AG04449 (cell line): ENCODE measurements at regions of chr10 and their contacts with region 1.

Region 1: DNA sequence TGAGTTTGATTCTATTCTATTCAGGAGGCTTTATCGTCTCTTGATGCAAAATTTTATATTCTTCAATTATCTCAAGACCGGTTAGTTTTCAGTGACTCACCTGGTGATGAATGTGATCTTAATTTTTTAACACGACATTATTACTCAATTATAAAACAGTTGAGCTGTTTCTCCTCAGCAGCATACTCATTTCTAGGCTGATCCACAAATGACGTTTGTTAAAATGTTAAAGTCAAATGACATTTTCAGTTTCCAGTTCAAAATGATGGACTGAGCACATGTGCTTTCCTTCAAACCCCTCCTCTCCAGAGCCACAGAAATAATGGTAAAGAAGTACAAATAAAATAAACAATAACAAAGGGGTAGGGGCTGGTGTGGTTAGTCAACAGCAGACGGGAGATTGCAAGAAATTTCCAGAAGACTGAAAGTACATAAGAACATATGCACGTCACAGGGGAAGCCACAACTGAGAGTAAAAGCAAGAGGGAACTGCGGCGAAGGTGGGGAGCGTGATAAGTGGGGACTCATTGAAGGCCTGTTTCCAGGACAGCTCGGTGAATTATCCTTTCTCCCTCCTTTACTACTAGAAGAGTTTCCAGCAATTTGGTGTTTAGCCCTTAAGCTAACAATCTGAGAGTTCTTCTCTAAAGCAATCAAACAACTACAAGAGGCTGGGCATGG is 10.9 kb downstream of the MACROH2A2 start:
- DNase-seq: no peak
- H3K4me3 ChIP-seq: no peak overlapping the region
- CTCF ChIP-seq: no peak

Region 2: DNA sequence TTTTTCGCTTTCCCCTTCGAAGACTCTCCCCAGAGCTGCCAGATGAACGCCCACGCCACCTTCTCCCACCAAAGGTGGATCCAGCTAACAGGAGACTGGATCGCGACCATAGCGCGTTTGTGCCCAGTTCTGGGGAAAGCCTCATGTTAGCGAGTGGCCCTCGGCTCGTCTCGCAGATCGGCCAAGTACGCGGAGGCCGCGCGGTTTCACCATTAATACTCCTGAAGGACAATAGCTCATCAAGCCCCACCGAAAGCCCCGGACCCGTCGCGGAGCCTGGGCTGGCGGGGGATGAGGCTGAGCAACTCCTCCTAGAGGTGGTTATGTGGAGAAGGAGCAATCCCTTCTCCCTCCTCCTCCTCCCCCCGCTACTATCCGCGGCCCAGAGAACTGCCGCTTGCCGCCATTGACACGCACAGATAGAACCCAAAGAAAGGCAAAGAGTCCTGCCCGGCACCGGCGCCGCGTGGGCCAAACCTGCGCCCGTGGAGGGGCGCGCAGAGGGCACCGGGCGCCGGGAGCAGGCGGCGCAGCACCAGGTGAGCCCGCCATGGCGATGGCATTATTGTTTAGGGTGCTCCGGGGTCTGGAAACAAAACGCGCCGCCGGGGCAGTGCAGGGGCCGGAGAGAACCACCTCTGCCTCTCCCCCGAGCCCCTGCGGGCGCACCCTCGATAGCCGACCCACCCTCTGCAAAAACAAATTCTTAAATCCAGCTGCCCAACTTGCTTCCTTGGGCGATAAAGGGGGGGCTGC is 10.9 kb before region 1 on chr10 and contains the start of gene MACROH2A2:
- CTCF ChIA-PET with region 1: interaction called, 15 read pairs
- POLR2A ChIA-PET with region 1: no interaction called
- DNase-seq: no peak
- H3K4me3 ChIP-seq: peak within 1 kb of the TSS; percentile 68
- CTCF ChIP-seq: peak; percentile 67